Body of pancreas (tissue), 4 donors: ENCODE measurements at regions of chr6 and their contacts with region 1.

Region 1: GRCh38 chr6:139230391-139230840 is 61.4 kb downstream of the TXLNB start:
- DNase-seq: no peak
- ATAC-seq: no peak
- H3K4me3 ChIP-seq: no peak overlapping the region
- H3K27ac ChIP-seq: no peak overlapping the region
- H3K4me1 ChIP-seq: no peaks in the 10 kb centered on the region
- H3K27me3 ChIP-seq: no peaks in the 10 kb centered on the region
- CTCF ChIP-seq: no peak
- POLR2A ChIP-seq: no peak

Region 2: DNA sequence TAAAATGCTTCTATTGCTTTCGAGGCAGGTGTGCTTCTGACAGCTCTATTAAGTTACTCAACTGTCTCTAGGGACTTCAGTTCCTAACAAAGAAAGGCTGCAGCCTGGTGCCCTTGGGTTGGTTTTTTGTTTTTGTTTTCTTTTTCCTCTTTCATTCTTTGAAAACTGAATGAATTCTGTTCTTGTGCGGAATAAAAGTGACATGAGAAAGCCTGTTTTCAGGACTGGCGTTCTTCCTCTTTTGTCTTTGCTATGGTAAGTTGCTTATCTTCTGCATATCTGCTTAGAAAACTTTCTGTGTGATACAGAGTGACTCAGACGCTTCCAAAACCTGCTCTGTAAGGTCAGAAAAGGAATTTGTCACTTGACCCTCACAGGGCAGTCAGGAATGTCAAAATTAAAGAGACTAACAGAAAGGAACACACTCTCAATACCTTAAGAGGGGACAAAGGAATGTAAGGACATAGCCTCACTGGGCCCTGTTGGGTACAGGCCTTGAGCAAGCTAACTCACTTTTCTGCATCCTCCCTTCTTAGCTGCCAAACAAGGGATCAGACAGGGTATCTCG is 674.9 kb before region 1 on chr6:
- intact Hi-C with region 1: no loop called
- DNase-seq: no peak
- ATAC-seq: peak; percentile 56
- H3K4me3 ChIP-seq: no peak overlapping the region
- H3K27ac ChIP-seq: peak overlapping the region in 2 of 4 donors; percentile 39 to 55
- H3K4me1 ChIP-seq: peaks cover 21% of the 10 kb centered on the region
- H3K27me3 ChIP-seq: no peaks in the 10 kb centered on the region
- CTCF ChIP-seq: no peak
- POLR2A ChIP-seq: no peak

Region 3: DNA sequence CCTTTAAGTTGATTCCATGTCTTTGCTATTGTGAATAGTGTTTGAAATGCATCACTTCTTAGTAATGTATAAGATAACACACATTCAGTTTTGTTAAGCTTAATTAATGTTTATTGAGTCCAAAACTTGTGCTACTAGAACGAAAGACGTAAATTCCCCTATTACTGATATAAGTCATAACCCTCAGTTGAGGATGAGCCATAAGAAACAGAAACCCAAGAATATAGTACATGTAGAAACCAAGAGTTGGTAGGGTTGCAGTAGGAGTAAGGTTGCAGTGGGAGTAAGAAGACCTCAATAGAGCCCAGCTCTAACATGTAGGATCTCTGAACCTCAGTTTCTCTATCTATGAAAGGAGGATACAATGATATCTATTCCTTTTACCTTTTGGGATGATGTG is 124.8 kb after region 1 on chr6:
- intact Hi-C with region 1: loop called (anchors 10 kb)
- DNase-seq: no peak
- ATAC-seq: no peak
- H3K4me3 ChIP-seq: no peak overlapping the region
- H3K27ac ChIP-seq: no peak overlapping the region
- H3K4me1 ChIP-seq: no peaks in the 10 kb centered on the region
- H3K27me3 ChIP-seq: no peaks in the 10 kb centered on the region
- CTCF ChIP-seq: no peak
- POLR2A ChIP-seq: no peak